GM12878 (cell line): ENCODE measurements at regions of chrX and their contacts with region 1.

Region 1: GRCh38 chrX:15493118-15493962 is at the start of gene PIR:
- DNase-seq: peak; percentile 17
- ATAC-seq: peak; percentile 97
- H3K4me3 ChIP-seq: peak within 1 kb of the TSS; percentile 48
- H3K27ac ChIP-seq: peak within 1 kb of the TSS; percentile 52
- H3K4me1 ChIP-seq: no peaks in the 10 kb centered on the region
- H3K27me3 ChIP-seq: no peaks in the 10 kb centered on the region
- CTCF ChIP-seq: peak; percentile 31 to 41 (median 38); a peak in 4 of 6 replicates
- EP300 ChIP-seq: no peak
- POLR2A ChIP-seq: peak; percentile 68
- RAD21 ChIP-seq: no peak
- polyA plus RNA-seq, gene PIR: 10.4 to 10.9 TPM

Region 2: GRCh38 chrX:15524417-15524816 is 31.1 kb after region 1 on chrX:
- CTCF ChIA-PET with region 1: no interaction called
- POLR2A ChIA-PET with region 1: no interaction called
- RAD21 ChIA-PET with region 1: no interaction called
- SMC1A ChIA-PET with region 1: no interaction called
- in situ Hi-C with region 1: no loop called
- intact Hi-C with region 1: no loop called
- DNase-seq: no peak
- ATAC-seq: no peak
- H3K4me3 ChIP-seq: no peak overlapping the region
- H3K27ac ChIP-seq: no peak overlapping the region
- H3K4me1 ChIP-seq: no peaks in the 10 kb centered on the region
- H3K27me3 ChIP-seq: peaks cover 0 to 5% of the 10 kb centered on the region in 2 experiments; a peak in 1 of 4 replicates
- CTCF ChIP-seq: no peak
- EP300 ChIP-seq: no peak
- POLR2A ChIP-seq: no peak
- RAD21 ChIP-seq: no peak

Region 3: DNA sequence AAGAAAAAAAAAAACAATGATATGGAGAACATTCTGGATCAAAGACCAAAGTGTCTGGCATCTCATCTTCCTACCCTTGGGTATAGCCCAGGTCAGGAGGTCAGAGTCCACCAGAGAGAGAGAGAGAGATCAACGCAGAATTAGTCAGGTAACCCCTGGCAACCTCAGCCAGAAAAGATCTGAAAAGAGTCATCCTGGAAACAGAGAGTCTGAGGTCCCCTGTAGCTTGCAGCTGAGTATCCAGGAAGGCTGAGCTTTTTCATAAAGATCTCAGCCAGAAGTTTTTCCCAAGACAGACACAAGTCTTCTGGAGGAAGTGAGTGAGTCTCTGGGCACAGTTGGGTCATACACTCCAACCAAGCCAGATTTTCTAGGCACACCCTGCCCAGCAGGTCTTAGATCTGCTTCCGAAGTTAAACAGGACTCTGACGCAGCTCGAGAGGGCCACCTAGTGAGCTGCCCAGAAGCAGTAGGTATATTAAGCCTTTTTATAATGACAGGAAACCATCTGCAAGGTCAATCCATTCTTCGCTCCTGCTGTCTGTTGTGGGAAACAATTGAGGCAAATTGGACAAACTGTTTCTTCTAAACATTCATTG is 71.7 kb after region 1 on chrX:
- CTCF ChIA-PET with region 1: interaction called, 16 read pairs
- POLR2A ChIA-PET with region 1: no interaction called
- RAD21 ChIA-PET with region 1: interaction called, 5 read pairs
- SMC1A ChIA-PET with region 1: no interaction called
- in situ Hi-C with region 1: no loop called
- intact Hi-C with region 1: loop called (anchors 1 kb)
- DNase-seq: peak; percentile 9
- ATAC-seq: peak; percentile 95
- H3K4me3 ChIP-seq: no peak overlapping the region
- H3K27ac ChIP-seq: no peak overlapping the region
- H3K4me1 ChIP-seq: no peaks in the 10 kb centered on the region
- H3K27me3 ChIP-seq: no peaks in the 10 kb centered on the region; a peak in 1 of 4 replicates
- CTCF ChIP-seq: peak; percentile 55 to 65 (median 57)
- EP300 ChIP-seq: no peak
- POLR2A ChIP-seq: no peak
- RAD21 ChIP-seq: peak; percentile 64

Region 4: GRCh38 chrX:15645258-15645657 is 151.9 kb after region 1 on chrX:
- CTCF ChIA-PET with region 1: no interaction called
- POLR2A ChIA-PET with region 1: no interaction called
- RAD21 ChIA-PET with region 1: no interaction called
- SMC1A ChIA-PET with region 1: no interaction called
- in situ Hi-C with region 1: no loop called
- intact Hi-C with region 1: loop called (anchors 2 kb)
- DNase-seq: no peak
- ATAC-seq: no peak
- H3K4me3 ChIP-seq: no peak overlapping the region
- H3K27ac ChIP-seq: no peak overlapping the region
- H3K4me1 ChIP-seq: no peaks in the 10 kb centered on the region
- H3K27me3 ChIP-seq: peaks cover 0 to 3% of the 10 kb centered on the region in 2 experiments; a peak in 1 of 4 replicates
- CTCF ChIP-seq: no peak
- EP300 ChIP-seq: no peak
- POLR2A ChIP-seq: no peak
- RAD21 ChIP-seq: no peak

Region 5: DNA sequence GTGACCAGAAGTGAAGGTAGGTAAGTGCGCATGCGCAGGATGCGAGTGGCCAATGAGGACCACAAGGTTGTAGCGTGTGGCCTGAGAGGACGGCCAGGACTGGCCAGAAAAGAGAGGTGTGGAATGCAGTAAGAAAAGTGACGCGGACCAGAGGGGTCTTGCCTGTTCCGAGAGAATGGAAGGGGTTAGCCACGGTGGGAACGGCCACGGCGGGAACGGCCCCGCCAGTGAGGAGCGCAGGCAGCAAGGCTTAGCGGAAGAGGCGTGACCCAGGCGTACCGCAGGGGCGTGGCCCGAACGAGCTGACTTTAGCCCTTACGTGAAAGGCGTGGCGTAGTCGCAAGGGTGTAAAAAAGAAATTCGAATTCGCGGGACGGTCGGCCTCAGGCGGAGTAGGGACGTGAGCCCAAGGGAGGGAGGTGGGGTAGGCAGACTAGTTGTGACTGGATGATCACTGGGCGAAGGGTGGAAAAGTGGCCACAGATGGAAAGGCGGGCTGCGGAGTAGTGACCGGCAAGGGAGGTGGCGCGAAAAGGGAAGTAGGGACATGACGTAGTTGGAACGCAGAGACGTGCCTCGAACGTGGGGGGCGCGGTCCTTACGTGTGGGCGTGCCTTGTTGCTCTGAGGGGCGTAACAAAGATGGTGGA is 181.6 kb after region 1 on chrX:
- CTCF ChIA-PET with region 1: no interaction called
- POLR2A ChIA-PET with region 1: no interaction called
- RAD21 ChIA-PET with region 1: no interaction called
- SMC1A ChIA-PET with region 1: no interaction called
- in situ Hi-C with region 1: no loop called
- intact Hi-C with region 1: loop called (anchors 10 kb)
- DNase-seq: peak; percentile 94
- ATAC-seq: peak; percentile 89
- H3K4me3 ChIP-seq: peak overlapping the region; percentile 81
- H3K27ac ChIP-seq: peak overlapping the region; percentile 88
- H3K4me1 ChIP-seq: peaks cover 14% of the 10 kb centered on the region
- H3K27me3 ChIP-seq: no peaks in the 10 kb centered on the region
- CTCF ChIP-seq: no peak
- EP300 ChIP-seq: no peak
- POLR2A ChIP-seq: peak; percentile 83
- RAD21 ChIP-seq: no peak